ENCODE measurements at regions of chr20 and their contacts with region 1.

Region 1: GRCh38 chr20:3980260-3981131 is 34.9 kb downstream of the RNF24 start:
- DNase-seq: peak; percentile 19
- H3K4me3 ChIP-seq: peak overlapping the region; percentile 42
- H3K27ac ChIP-seq: no peak overlapping the region
- H3K4me1 ChIP-seq: peaks cover 8% of the 10 kb centered on the region
- CTCF ChIP-seq: no peak

Region 2: GRCh38 chr20:3894796-3895195 is 85.7 kb before region 1 on chr20:
- CTCF ChIA-PET with region 1: no interaction called
- POLR2A ChIA-PET with region 1: no interaction called
- intact Hi-C with region 1: no loop called
- DNase-seq: no peak
- H3K4me3 ChIP-seq: no peak overlapping the region
- H3K27ac ChIP-seq: no peak overlapping the region
- H3K4me1 ChIP-seq: peaks cover 75% of the 10 kb centered on the region
- CTCF ChIP-seq: no peak

Region 3: GRCh38 chr20:3990716-3991115 is 10.2 kb after region 1 on chr20:
- CTCF ChIA-PET with region 1: no interaction called
- POLR2A ChIA-PET with region 1: interaction called, 11 read pairs
- intact Hi-C with region 1: no loop called
- DNase-seq: no peak
- H3K4me3 ChIP-seq: no peak overlapping the region
- H3K27ac ChIP-seq: no peak overlapping the region
- H3K4me1 ChIP-seq: no peaks in the 10 kb centered on the region
- CTCF ChIP-seq: no peak

Measured in OCI-LY7 (cell line).